ENCODE measurements at regions of chr20 and their contacts with region 1.

Region 1: DNA sequence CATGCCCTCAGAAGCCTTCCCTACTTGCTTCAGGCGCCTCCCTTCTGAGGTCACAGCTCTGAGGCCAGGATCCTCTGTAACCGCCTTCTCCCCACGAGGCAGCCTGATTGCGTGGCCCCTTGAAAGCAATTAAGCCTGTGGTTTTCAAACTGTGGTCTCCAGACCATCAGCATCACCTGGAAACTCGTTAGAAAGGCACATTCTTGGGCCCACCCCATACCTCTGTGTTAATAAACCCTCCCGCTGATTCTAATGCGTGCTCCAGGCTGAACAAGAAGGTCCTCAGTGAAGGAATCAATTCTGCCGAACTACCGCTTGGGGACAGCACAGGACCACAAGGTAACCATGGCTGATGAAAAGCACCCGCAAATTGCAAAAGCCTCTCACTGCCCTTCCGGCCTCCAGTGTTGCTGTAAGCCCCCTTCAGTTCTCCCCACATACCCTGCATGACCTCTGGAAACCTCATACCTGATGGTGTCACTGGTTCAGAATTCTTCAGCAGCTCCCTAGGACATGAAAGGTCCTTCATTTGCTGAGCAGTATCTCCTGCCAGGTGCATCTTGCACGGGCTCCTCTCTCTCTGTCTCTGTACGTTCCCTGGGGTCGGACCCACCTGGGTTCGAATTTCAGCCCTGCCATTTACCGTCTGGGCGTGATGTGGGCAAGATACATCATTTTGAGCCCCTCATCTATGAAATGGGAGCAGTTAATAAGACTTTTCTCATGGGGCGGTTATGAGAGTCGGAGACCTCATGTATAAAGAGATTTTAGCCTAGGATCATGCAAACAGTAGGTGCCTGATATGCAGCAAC is 93.3 kb upstream of the RNF24 start:
- DNase-seq: peak; percentile 83
- CTCF ChIP-seq: peak; percentile 95

Region 2: GRCh38 chr20:4490606-4491280 is 382.0 kb after region 1 on chr20:
- in situ Hi-C with region 1: no loop called
- DNase-seq: no peak
- CTCF ChIP-seq: no peak

Region 3: DNA sequence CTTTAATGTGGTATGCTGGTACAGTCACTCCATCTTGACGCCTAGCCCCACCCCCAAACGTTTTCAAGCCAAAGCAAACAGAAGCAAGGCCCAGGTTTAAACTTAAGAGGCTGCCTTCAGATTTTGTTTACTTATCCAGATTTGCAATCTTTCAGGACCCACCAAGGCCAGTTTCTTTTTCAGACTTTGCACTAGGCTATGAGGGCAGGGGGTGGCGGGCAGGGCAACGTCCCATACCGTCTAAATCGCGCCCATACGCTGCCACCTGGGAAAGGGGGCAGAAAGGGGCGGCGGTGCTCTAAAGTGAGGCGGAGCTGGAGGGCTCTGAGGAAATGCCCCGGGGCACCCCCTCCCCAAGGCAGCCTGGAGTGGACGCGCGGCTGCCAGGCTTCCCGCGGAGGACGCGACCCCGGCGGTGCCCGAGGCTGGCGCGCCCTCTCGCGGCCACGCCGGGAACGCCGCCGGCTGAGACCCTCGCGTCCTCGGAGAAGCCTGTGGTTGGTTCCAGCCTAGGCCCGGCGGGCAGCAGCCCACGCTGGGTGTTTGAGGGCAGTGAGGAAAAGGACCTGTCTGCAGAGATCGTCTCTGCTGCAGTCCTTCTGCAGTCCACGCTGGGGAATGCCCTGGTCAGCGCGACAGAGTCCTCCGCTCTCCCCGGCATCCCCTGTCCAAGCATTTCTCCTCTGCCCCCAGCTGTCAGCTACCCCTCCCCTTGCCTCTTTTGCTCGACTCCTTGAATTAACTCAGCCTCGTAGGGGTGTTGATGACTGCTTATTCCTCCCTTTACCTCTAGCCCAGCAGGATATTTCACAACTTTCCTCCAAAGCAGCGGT is 483.8 kb after region 1 on chr20:
- in situ Hi-C with region 1: loop called (anchors 25 kb)
- DNase-seq: peak; percentile 77
- CTCF ChIP-seq: peak; percentile 96

Region 4: GRCh38 chr20:4944518-4945313 is 836.0 kb after region 1 on chr20:
- in situ Hi-C with region 1: no loop called
- DNase-seq: no peak
- CTCF ChIP-seq: no peak

Measured in GM13977 (cell line).